Panc1 (cell line): ENCODE measurements at regions of chr2 and their contacts with region 1.

Region 1: DNA sequence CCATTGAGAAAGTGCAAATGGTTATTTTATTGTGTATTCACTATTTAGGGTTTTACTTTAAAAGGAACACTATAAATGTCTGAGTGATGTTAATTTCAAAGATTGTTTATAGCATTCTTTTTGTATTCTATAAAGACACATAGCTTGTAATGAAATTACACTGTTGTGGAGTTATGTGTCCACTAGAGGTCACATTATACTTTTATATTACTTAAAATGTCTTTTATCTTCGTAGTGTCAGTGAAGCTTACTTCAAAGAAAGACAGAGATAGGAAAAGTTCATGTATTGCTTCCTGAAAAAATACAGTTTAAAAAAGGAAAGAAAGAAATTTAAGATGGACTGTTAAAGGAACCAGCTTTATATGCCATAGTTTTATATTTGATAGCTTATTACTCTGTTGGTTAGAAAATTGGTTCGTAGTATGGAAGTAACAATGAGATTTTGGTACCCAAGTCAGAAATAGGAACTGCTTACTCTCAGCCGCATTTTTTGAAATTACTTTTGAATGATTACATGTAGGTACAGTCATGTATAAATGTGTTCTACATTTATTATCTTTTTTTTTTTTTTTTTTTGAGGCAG is 20.5 kb downstream of the APLF start:
- DNase-seq: no peak
- ATAC-seq: no peak
- H3K4me3 ChIP-seq: no peak overlapping the region
- H3K27ac ChIP-seq: no peak overlapping the region
- H3K4me1 ChIP-seq: no peaks in the 10 kb centered on the region
- H3K27me3 ChIP-seq: no peaks in the 10 kb centered on the region
- CTCF ChIP-seq: peak; percentile 39; the same call in 1 of the 2 replicates

Region 2: DNA sequence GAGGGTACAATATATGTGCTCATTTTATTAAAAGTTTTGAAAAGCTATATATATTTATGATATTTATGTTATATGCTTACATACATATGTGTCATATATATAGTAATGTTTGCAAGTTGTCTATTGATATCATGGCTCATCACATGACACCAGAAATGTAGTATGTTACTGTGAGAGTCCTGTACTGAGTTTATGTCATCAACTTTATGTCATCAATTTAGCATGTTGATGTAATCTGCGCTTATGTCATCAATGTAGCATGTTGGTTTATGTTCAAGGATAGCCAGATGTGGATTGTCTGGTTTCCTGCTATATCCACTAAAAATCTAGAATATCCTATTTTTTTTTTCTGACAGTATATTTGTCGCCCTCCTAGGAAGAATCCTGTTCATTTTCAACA is 56.9 kb after region 1 on chr2:
- CTCF ChIA-PET with region 1: no interaction called
- POLR2A ChIA-PET with region 1: no interaction called
- in situ Hi-C with region 1: no loop called
- intact Hi-C with region 1: no loop called
- DNase-seq: no peak
- ATAC-seq: no peak
- H3K4me3 ChIP-seq: no peak overlapping the region
- H3K27ac ChIP-seq: no peak overlapping the region
- H3K4me1 ChIP-seq: no peaks in the 10 kb centered on the region
- H3K27me3 ChIP-seq: no peaks in the 10 kb centered on the region
- CTCF ChIP-seq: no peak

Region 3: GRCh38 chr2:68594674-68595492 is 107.0 kb after region 1 on chr2:
- CTCF ChIA-PET with region 1: interaction called, 11 read pairs
- POLR2A ChIA-PET with region 1: no interaction called
- in situ Hi-C with region 1: no loop called
- intact Hi-C with region 1: no loop called
- DNase-seq: peak; percentile 35
- ATAC-seq: peak; percentile 77; the same call in 1 of the 2 replicates
- H3K4me3 ChIP-seq: no peak overlapping the region
- H3K27ac ChIP-seq: no peak overlapping the region
- H3K4me1 ChIP-seq: no peaks in the 10 kb centered on the region
- H3K27me3 ChIP-seq: no peaks in the 10 kb centered on the region; the same call in 1 of the 2 replicates
- CTCF ChIP-seq: peak; percentile 86

Region 4: GRCh38 chr2:68605939-68606338 is 118.1 kb after region 1 on chr2:
- CTCF ChIA-PET with region 1: interaction called, 11 read pairs
- POLR2A ChIA-PET with region 1: no interaction called
- in situ Hi-C with region 1: no loop called
- intact Hi-C with region 1: no loop called
- DNase-seq: no peak
- ATAC-seq: no peak
- H3K4me3 ChIP-seq: no peak overlapping the region
- H3K27ac ChIP-seq: no peak overlapping the region
- H3K4me1 ChIP-seq: no peaks in the 10 kb centered on the region
- H3K27me3 ChIP-seq: no peaks in the 10 kb centered on the region
- CTCF ChIP-seq: no peak

Region 5: DNA sequence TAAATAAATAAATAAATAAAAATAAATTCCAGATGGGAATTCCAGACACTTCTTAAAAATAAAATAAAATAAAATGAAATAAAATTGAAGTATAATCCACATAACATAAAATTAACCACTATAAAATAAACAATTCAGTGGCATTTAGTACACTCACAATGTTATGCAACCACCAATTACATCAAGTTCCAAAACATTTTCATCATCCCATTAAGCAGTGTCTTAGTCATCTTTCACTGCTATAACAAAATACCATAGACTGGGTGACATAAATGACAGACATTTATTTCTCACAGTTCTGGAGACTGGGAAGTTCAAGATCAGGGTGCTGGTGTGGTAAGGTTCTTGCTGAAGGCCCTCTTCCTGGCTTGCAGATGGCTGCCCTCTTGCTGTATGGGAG is 132.9 kb after region 1 on chr2:
- CTCF ChIA-PET with region 1: no interaction called
- POLR2A ChIA-PET with region 1: no interaction called
- in situ Hi-C with region 1: no loop called
- intact Hi-C with region 1: no loop called
- DNase-seq: no peak
- ATAC-seq: no peak
- H3K4me3 ChIP-seq: no peak overlapping the region
- H3K27ac ChIP-seq: no peak overlapping the region
- H3K4me1 ChIP-seq: no peaks in the 10 kb centered on the region
- H3K27me3 ChIP-seq: no peaks in the 10 kb centered on the region
- CTCF ChIP-seq: no peak

Region 6: DNA sequence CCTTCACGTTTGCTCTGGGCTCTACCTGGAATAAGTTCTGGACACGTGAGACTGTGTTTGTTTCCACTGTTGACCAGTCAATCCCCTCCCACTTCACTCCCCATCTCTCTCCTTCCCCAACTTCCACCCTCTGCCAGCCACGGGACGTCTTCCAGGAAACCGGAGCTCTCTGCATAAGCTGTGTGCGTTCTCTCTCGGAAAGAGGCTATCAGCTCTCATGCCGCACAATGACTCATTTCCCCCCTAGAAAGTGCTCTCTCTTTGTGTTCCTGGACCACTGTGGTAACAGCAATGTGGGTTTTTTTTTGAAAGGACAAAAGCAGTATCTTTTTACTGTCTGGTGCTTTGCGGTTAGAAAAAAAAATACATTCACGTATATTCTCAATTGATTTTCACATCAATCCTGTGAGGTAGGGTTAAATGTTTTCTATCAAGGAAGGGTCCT is 165.7 kb after region 1 on chr2:
- CTCF ChIA-PET with region 1: no interaction called
- POLR2A ChIA-PET with region 1: no interaction called
- in situ Hi-C with region 1: no loop called
- intact Hi-C with region 1: no loop called
- DNase-seq: no peak
- ATAC-seq: no peak
- H3K4me3 ChIP-seq: no peak overlapping the region
- H3K27ac ChIP-seq: no peak overlapping the region
- H3K4me1 ChIP-seq: no peaks in the 10 kb centered on the region
- H3K27me3 ChIP-seq: peaks cover 27% of the 10 kb centered on the region
- CTCF ChIP-seq: no peak

Region 7: GRCh38 chr2:68714866-68715265 is 227.0 kb after region 1 on chr2:
- CTCF ChIA-PET with region 1: no interaction called
- POLR2A ChIA-PET with region 1: no interaction called
- in situ Hi-C with region 1: no loop called
- intact Hi-C with region 1: loop called (anchors 5 kb)
- DNase-seq: no peak
- ATAC-seq: no peak
- H3K4me3 ChIP-seq: no peak overlapping the region
- H3K27ac ChIP-seq: no peak overlapping the region
- H3K4me1 ChIP-seq: no peaks in the 10 kb centered on the region
- H3K27me3 ChIP-seq: 0 out of 2 replicates have a peak, but pooled peaks cover 2% of the 10 kb centered on the region
- CTCF ChIP-seq: no peak

Region 8: GRCh38 chr2:68925295-68925896 is 437.5 kb after region 1 on chr2:
- CTCF ChIA-PET with region 1: interaction called, 10 read pairs
- POLR2A ChIA-PET with region 1: no interaction called
- in situ Hi-C with region 1: no loop called
- intact Hi-C with region 1: no loop called
- DNase-seq: peak; percentile 66
- ATAC-seq: peak; percentile 77
- H3K4me3 ChIP-seq: no peak overlapping the region
- H3K27ac ChIP-seq: no peak overlapping the region
- H3K4me1 ChIP-seq: 0 out of 2 replicates have a peak, but pooled peaks cover 2% of the 10 kb centered on the region
- H3K27me3 ChIP-seq: no peaks in the 10 kb centered on the region
- CTCF ChIP-seq: peak; percentile 98

Region 9: GRCh38 chr2:69012310-69013141 is 524.7 kb after region 1 on chr2:
- CTCF ChIA-PET with region 1: interaction called, 10 read pairs
- POLR2A ChIA-PET with region 1: no interaction called
- in situ Hi-C with region 1: no loop called
- intact Hi-C with region 1: no loop called
- DNase-seq: no peak
- ATAC-seq: peak; percentile 64
- H3K4me3 ChIP-seq: peak overlapping the region; percentile 85 to 98
- H3K27ac ChIP-seq: peak overlapping the region; percentile 96
- H3K4me1 ChIP-seq: peaks cover 25% of the 10 kb centered on the region
- H3K27me3 ChIP-seq: no peaks in the 10 kb centered on the region
- CTCF ChIP-seq: peak; percentile 88